Left cardiac atrium (tissue), 4 donors: ENCODE measurements at regions of chr6 and their contacts with region 1.

Region 1: DNA sequence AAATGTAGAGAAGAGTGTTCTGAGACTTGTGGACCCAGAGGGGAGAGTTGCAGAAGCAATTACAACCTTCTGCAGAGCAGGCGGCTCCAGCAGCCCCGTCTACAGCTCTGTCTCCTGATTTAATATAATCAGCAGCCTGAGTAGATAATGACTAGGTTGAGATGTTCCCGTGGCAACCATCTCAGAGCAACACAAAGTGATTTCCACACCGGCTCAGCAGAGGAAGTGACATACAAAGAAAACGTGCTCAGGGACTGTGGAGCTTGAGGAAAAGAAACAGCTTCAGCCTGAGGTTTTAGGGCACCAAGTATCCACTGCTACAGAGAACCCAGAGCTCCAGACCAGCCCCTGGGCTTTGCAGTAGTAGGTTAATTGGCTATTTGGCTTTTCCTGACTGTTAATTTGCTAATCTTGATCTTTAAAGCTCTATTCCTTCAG is 136.4 kb downstream of the MTFR2 start:
- DNase-seq: peak; percentile 71
- ATAC-seq: peak; percentile 90 to 95

Region 2: GRCh38 chr6:136037876-136038460 is 75.8 kb before region 1 on chr6:
- intact Hi-C with region 1: loop called (anchors 10 kb)
- DNase-seq: peak; percentile 41
- ATAC-seq: peak; percentile 36 to 70

Region 3: GRCh38 chr6:136067731-136068341 is 45.9 kb before region 1 on chr6:
- intact Hi-C with region 1: loop called in 1 of 2 experiments (anchors 5 kb)
- DNase-seq: no peak
- ATAC-seq: peak; percentile 33 to 77